ENCODE measurements at regions of chr20 and their contacts with region 1.

Region 1: DNA sequence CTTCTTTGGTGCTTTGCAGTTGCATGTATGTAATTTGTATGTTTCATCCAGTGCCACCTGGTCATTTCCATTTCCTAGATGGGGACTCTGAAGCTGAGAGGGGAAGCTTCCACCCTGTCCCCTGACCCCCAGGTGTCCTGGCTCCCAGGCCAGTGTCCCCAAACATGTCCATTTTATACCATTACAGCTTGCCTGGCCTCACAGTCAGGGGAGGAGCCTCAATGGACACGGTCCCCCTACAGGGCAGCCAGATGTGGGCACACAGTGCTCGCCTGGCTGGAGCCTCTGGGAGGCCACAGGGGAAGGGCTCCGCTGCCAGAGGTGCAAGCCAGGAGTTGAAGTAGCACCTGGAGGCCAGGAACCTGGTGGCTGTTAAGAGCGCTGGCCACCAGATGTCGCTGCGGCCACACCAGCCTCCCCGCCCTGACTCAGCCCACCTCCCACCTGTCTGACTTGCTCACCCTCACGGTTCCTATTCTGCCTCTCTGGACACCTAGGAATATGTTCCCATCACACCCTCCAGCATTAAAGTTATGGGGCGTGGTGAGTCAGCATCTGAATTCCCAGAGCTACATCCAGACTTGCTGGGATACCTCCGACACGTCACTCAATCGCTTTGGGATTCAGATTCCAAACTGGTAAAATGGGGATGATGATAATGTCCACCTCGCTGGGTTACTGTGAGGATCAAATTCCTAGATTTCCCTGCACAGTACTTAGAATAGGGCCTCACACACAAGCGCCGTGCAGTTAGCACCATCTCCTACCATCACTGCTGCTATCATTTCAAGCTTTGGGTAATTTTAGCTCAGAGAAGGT is 107.4 kb downstream of the SULF2 start:
- DNase-seq: no peak
- H3K4me3 ChIP-seq: no peak overlapping the region
- H3K27ac ChIP-seq: no peak overlapping the region
- H3K27me3 ChIP-seq: peaks cover 10% of the 10 kb centered on the region
- CTCF ChIP-seq: peak; percentile 74

Region 2: DNA sequence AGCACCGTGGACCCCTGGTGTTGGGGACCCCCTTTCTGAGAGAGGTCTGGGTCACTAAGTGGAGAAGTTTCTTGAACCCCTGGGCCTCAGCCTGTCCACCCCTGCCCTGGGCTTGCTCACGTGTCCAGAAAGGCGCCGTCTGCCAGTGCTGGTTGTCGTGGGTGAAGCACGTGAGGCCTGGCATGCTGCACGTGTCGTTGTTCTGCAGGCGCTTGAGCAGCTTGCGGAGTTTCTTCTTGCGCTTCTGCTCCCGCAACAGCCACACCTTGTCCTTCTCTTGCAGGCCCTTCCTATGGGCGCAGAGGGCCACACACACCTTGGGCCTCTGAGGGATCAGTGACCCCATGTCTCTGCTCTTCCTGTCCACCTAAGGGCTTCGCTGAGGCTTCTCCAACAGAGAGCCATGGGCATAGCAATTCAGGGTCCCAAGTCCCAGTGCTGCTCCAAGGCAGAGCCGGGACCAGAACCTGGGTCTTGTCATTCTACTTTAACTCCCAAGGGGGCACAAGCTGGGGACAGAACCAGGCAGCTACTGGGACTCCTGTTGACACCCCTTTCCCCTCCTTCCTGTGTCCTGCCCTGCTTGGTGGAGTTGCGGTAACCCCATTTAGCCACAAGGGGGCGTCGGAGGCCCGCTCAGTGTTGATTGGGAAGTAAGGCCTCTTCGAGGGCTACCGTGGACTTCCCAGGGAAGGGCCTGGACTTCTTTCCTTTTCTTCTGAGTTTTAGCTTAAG is 14.3 kb before region 1 on chr20:
- CTCF ChIA-PET with region 1: interaction called, 17 read pairs
- POLR2A ChIA-PET with region 1: no interaction called
- DNase-seq: peak; percentile 57
- H3K4me3 ChIP-seq: no peak overlapping the region
- H3K27ac ChIP-seq: no peak overlapping the region
- H3K27me3 ChIP-seq: no peaks in the 10 kb centered on the region
- CTCF ChIP-seq: peak; percentile 97

Measured in AG04450 (cell line).